HCT116 (cell line): ENCODE measurements at regions of chr4 and their contacts with region 1.

Region 1: GRCh38 chr4:8241895-8242696 is 27.5 kb upstream of the HTRA3 start:
- DNase-seq: peak; percentile 22
- ATAC-seq: peak; percentile 96
- H3K4me3 ChIP-seq: no peak overlapping the region
- H3K27ac ChIP-seq: no peak overlapping the region
- H3K4me1 ChIP-seq: peaks cover 6 to 10% of the 10 kb centered on the region in 2 experiments; a peak in 3 of 4 replicates
- H3K27me3 ChIP-seq: no peaks in the 10 kb centered on the region
- CTCF ChIP-seq: peak; percentile 87 to 96 (median 90)
- POLR2A ChIP-seq: no peak
- RAD21 ChIP-seq: peak; percentile 85

Region 2: GRCh38 chr4:7978489-7978888 is 263.6 kb before region 1 on chr4:
- CTCF ChIA-PET with region 1: no interaction called
- POLR2A ChIA-PET with region 1: no interaction called
- RAD21 ChIA-PET with region 1: no interaction called
- intact Hi-C with region 1: no loop called
- DNase-seq: peak; percentile 47
- ATAC-seq: peak; percentile 88
- H3K4me3 ChIP-seq: peak overlapping the region in 1 of 2 experiments; percentile 15; a peak in 1 of 4 replicates
- H3K27ac ChIP-seq: peak overlapping the region; percentile 6; the same call in 1 of the 2 replicates
- H3K4me1 ChIP-seq: peaks cover 24 to 33% of the 10 kb centered on the region in 2 experiments
- H3K27me3 ChIP-seq: no peaks in the 10 kb centered on the region
- CTCF ChIP-seq: no peak
- POLR2A ChIP-seq: no peak
- RAD21 ChIP-seq: no peak

Region 3: DNA sequence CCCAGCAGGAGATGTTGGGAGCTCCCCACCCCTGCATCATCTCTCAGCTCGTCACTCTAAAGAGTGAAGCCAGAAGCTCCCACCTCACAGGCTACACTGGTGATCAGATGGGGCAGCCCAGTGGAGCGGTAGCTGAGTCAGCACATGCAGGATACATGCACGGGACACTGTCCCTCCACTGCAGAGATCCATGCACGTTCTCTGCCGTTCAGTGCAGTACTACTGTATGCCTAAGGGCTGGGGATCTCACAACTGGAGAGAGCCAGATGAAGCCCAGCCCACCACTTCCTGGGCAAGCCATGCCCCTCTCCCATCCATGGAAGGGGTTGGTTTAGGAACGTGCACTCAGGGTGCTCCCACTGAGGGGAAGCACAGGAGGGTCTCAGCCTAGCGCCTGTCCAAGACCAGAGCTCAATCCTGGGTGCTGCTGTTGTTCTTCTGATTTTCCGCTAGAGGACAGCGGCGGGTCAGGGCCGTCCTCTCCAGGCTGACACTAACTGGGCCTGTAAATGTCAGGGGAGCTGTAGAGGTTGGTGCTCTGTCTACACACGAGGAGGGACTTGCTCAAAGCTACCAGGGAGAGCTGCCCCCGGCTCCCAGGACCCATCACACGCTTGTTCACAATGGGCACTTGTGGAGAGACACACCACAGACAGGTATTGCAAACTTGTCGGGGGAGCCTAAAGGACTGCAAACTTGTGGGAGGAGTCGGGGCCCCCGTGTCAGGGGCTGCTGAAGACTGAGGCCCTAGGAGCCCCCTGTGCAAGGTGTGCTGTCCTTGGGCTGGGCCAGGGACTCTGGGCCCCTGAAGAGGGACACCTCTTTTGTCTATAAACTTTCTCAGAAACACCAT is 65.3 kb before region 1 on chr4:
- CTCF ChIA-PET with region 1: interaction called, 9 read pairs
- POLR2A ChIA-PET with region 1: no interaction called
- RAD21 ChIA-PET with region 1: interaction called in 1 of 2 experiments, 3 read pairs
- intact Hi-C with region 1: loop called (anchors 2 kb)
- DNase-seq: peak; percentile 19
- ATAC-seq: peak; percentile 96
- H3K4me3 ChIP-seq: no peak overlapping the region
- H3K27ac ChIP-seq: no peak overlapping the region
- H3K4me1 ChIP-seq: peaks cover 0 to 18% of the 10 kb centered on the region in 2 experiments; a peak in 1 of 4 replicates
- H3K27me3 ChIP-seq: 0 out of 2 replicates have a peak, but pooled peaks cover 3% of the 10 kb centered on the region
- CTCF ChIP-seq: peak; percentile 84 to 89 (median 88)
- POLR2A ChIP-seq: no peak
- RAD21 ChIP-seq: peak; percentile 97

Region 4: DNA sequence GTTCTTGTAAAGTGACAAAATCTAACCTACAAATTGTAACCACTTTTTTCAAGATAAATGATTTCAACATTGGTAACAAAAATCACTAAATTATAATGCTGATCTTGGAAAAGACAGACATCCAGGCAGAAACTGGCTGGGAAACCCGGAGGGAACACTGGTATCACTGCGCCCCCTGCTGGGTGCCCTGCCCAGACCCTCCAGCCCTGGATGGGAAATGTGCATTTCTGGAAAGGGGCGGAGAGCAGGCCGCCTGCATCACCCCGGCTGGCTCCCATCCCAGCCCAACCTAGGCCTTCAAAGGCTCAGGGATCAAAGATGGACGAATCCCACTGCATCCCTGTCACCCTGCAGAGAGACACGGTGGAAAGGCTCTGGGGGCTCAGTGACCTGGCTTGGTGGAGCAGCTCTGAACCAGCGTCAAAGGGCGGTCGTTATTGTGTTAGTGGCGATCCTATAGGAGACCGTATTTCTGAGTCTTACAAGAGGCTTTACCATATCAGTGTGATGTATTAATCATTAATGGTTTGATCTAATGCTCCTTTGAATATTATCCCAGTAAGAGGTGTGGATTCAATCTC is 161.2 kb after region 1 on chr4:
- CTCF ChIA-PET with region 1: interaction called, 14 read pairs
- POLR2A ChIA-PET with region 1: no interaction called
- RAD21 ChIA-PET with region 1: interaction called in 1 of 2 experiments, 3 read pairs
- intact Hi-C with region 1: loop called (anchors 1 kb)
- DNase-seq: peak; percentile 23
- ATAC-seq: peak; percentile 93
- H3K4me3 ChIP-seq: no peak overlapping the region
- H3K27ac ChIP-seq: no peak overlapping the region
- H3K4me1 ChIP-seq: no peaks in the 10 kb centered on the region
- H3K27me3 ChIP-seq: no peaks in the 10 kb centered on the region
- CTCF ChIP-seq: peak; percentile 86 to 94 (median 91)
- POLR2A ChIP-seq: no peak
- RAD21 ChIP-seq: peak; percentile 91

Region 5: DNA sequence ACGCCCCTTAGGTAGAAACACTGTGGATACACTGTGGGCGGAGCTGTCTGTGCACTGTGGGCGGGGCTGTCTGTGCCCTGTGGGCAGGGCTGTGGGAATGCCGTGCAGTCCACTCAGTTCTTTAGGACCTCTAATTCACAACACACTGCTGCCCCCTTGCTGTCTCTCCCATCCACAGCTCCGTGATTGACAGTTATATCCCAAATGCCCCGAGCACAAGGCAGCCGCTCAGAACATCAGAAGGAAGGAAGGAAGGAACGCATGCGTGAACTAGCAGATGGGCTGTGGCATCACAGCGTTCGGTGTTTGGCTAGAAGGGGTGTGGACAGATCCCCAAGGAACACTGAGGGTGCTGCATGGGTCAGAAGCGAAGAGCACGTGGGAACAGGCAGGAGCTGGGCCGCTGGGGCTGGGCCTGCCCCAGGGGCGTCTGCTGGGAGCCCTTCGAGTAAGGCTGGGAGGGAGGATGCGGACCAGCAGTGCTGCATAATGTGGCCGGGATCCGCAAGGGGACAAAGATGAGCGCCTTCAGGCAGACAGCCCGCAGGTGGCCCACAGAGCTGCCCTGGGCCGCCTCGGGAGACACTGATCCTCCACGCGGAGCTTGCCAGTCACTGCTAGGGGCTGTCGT is 168.7 kb after region 1 on chr4:
- CTCF ChIA-PET with region 1: interaction called, 17 read pairs
- POLR2A ChIA-PET with region 1: no interaction called
- RAD21 ChIA-PET with region 1: interaction called, 3 to 6 read pairs
- intact Hi-C with region 1: loop called (anchors 1 kb)
- DNase-seq: peak; percentile 81
- ATAC-seq: peak; percentile 94
- H3K4me3 ChIP-seq: no peak overlapping the region
- H3K27ac ChIP-seq: no peak overlapping the region
- H3K4me1 ChIP-seq: peaks cover 12 to 15% of the 10 kb centered on the region in 2 experiments; a peak in 3 of 4 replicates
- H3K27me3 ChIP-seq: no peaks in the 10 kb centered on the region
- CTCF ChIP-seq: peak; percentile 61 to 67 (median 66)
- POLR2A ChIP-seq: no peak
- RAD21 ChIP-seq: peak; percentile 76

Region 6: GRCh38 chr4:8547108-8547970 is 305.2 kb after region 1 on chr4:
- CTCF ChIA-PET with region 1: no interaction called
- POLR2A ChIA-PET with region 1: no interaction called
- RAD21 ChIA-PET with region 1: no interaction called
- intact Hi-C with region 1: loop called (anchors 2 kb)
- DNase-seq: peak; percentile 56
- ATAC-seq: peak; percentile 81
- H3K4me3 ChIP-seq: no peak overlapping the region
- H3K27ac ChIP-seq: no peak overlapping the region
- H3K4me1 ChIP-seq: peaks cover 0 to 21% of the 10 kb centered on the region in 2 experiments; a peak in 3 of 4 replicates
- H3K27me3 ChIP-seq: 0 out of 2 replicates have a peak, but pooled peaks cover 2% of the 10 kb centered on the region
- CTCF ChIP-seq: peak in 2 of 3 experiments; percentile 70 to 77; a peak in 4 of 6 replicates
- POLR2A ChIP-seq: no peak
- RAD21 ChIP-seq: no peak

Region 7: DNA sequence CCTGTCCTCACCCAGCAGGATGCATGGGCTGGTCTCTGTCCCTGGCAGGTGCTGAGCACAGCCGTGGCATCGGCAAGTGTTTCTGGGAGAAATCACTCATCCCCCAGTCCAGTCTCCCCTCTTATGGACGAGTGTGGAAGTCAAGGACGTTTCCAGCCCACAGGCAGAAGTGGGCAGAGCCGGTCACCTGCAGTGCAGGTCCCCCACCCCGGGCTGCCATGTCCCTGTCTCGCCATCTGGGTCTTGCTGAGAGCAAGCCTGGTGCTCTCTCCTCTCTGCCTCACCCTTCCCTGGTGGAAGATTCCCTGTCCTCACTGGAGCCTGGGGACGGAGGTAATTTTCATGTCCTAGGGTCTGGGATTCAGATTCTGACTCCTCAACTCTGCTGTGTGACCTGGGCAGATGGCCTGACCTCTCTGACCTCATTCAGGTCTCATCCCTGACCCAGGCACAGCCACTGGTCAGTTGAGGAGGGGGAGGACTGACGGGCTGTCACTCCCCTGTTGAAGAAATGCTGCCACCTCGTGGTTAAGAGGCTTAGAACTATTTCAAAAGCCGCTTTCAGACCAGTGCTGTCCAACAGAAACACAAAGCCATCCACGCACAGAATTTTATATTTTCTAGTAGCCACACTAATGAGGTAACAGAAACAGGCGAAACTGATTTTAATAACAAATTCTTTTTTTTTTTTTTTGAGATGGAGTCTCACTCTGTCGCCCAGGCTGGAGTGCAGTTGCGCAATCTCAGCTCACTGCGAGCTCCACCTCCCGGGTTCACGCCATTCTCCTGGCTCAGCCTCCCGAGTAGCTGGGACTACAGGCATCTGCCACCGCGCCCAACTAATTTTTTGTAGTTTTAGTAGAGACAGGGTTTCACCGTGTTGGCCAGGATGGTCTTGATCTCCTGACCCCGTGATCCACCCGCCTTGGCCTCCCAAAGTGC is 352.3 kb after region 1 on chr4:
- CTCF ChIA-PET with region 1: interaction called, 3 read pairs
- POLR2A ChIA-PET with region 1: no interaction called
- RAD21 ChIA-PET with region 1: no interaction called
- intact Hi-C with region 1: loop called (anchors 10 kb)
- DNase-seq: peak; percentile 64
- ATAC-seq: peak; percentile 83
- H3K4me3 ChIP-seq: no peak overlapping the region
- H3K27ac ChIP-seq: no peak overlapping the region
- H3K4me1 ChIP-seq: peaks cover 3 to 10% of the 10 kb centered on the region in 2 experiments; a peak in 3 of 4 replicates
- H3K27me3 ChIP-seq: 0 out of 2 replicates have a peak, but pooled peaks cover 5% of the 10 kb centered on the region
- CTCF ChIP-seq: peak; percentile 67 to 82 (median 78)
- POLR2A ChIP-seq: no peak
- RAD21 ChIP-seq: peak; percentile 92